ENCODE measurements at regions of chr10 and their contacts with region 1.

Region 1: DNA sequence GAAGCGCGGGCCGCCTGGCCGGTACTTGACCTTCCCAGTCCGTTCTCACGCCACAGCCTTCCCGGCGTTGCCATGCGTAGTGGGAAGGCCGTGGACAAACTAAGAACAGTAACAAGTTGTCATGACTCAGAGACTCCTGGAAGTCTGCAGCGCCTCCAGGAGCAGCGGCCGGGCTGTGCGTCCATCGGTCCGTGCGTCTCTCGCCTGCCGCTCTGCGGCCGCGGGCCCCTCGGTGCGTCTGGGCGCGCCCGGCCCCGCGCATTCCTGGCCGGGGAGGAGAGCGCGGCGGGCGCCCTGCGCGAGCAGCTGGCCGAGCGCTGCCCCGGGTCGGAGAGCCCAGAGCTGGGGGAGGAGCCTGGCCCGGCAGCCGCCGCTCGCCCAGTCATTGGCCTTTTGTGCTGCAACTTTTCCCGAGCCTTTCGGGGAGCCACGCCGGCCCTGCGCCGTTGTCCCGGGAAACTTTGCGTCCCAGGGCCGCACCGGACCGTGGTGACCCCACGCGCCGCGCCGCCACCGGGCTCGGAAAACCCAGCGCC is 123.7 kb downstream of the TACC2 start:
- DNase-seq: peak; percentile 91 to 94
- H3K4me3 ChIP-seq: peak overlapping the region; percentile 94
- H3K4me3 Mint-ChIP-seq: peak overlapping the region; percentile 79
- H3K27ac Mint-ChIP-seq: peak overlapping the region; percentile 61
- H3K4me1 ChIP-seq: peaks cover 16% of the 10 kb centered on the region
- H3K4me1 Mint-ChIP-seq: peaks cover 23% of the 10 kb centered on the region
- H3K27me3 ChIP-seq: no peaks in the 10 kb centered on the region
- H3K27me3 Mint-ChIP-seq: no peaks in the 10 kb centered on the region
- CTCF ChIP-seq: peak in 1 of 2 experiments; percentile 61

Region 2: DNA sequence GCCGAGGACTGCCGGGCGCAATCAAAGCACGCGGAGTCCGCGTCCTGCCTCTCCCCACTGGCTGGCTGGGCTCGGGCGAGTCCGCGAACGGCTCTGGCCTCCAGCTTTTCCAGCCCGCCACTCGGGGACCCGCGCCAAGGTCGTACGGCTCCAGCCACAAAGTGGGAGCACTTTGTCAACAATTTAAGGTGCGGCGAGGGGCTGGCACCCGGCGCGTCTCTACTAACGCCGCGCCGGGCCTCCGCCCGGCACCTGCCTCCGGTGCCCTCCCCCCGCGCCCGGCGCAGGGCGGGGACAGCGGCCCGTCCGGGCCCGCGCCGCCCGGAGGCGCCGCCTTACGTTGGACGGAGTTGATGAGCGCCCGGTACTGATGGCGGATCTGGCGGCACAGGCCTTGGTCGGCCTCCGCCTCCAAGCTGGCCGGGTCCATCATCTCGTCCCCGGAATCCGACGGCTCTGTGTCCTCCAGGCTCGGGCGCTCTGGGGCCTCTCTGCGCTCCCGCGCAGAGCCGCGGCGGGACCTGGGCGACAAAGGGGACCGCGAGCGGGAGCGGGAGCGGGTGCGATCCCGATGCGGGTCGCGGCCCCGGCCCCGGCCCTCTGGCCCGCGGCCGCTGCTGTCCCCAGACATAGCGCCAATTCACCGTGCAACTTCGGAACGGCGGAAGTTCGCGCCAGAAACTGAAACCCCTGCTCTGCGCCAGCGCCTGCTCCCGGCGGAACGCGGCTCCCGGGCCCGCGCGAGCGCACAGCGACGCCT is 138.0 kb before region 1 on chr10 and contains the start of gene NSMCE4A:
- CTCF ChIA-PET with region 1: no interaction called
- POLR2A ChIA-PET with region 1: no interaction called
- intact Hi-C with region 1: loop called (anchors 2 kb)
- DNase-seq: peak; percentile 79 to 89
- H3K4me3 ChIP-seq: peak within 1 kb of the TSS; percentile 95
- H3K4me3 Mint-ChIP-seq: peak within 1 kb of the TSS; percentile 72
- H3K27ac Mint-ChIP-seq: peak within 1 kb of the TSS; percentile 48
- H3K4me1 ChIP-seq: peaks cover 6% of the 10 kb centered on the region
- H3K4me1 Mint-ChIP-seq: peaks cover 9% of the 10 kb centered on the region
- H3K27me3 ChIP-seq: no peaks in the 10 kb centered on the region
- H3K27me3 Mint-ChIP-seq: no peaks in the 10 kb centered on the region
- CTCF ChIP-seq: peak; percentile 60 to 66
- total RNA-seq, gene NSMCE4A: 106 and 111 TPM in 2 replicates

Region 3: GRCh38 chr10:122044045-122044661 is 68.5 kb before region 1 on chr10:
- CTCF ChIA-PET with region 1: interaction called, 10 read pairs
- POLR2A ChIA-PET with region 1: interaction called, 5 read pairs
- intact Hi-C with region 1: no loop called
- DNase-seq: peak; percentile 51 to 55
- H3K4me3 ChIP-seq: no peak overlapping the region
- H3K4me3 Mint-ChIP-seq: peak overlapping the region; percentile 10
- H3K27ac Mint-ChIP-seq: peak overlapping the region; percentile 33
- H3K4me1 ChIP-seq: peaks cover 14% of the 10 kb centered on the region
- H3K4me1 Mint-ChIP-seq: peaks cover 24% of the 10 kb centered on the region
- H3K27me3 ChIP-seq: no peaks in the 10 kb centered on the region
- H3K27me3 Mint-ChIP-seq: no peaks in the 10 kb centered on the region
- CTCF ChIP-seq: no peak

Region 4: DNA sequence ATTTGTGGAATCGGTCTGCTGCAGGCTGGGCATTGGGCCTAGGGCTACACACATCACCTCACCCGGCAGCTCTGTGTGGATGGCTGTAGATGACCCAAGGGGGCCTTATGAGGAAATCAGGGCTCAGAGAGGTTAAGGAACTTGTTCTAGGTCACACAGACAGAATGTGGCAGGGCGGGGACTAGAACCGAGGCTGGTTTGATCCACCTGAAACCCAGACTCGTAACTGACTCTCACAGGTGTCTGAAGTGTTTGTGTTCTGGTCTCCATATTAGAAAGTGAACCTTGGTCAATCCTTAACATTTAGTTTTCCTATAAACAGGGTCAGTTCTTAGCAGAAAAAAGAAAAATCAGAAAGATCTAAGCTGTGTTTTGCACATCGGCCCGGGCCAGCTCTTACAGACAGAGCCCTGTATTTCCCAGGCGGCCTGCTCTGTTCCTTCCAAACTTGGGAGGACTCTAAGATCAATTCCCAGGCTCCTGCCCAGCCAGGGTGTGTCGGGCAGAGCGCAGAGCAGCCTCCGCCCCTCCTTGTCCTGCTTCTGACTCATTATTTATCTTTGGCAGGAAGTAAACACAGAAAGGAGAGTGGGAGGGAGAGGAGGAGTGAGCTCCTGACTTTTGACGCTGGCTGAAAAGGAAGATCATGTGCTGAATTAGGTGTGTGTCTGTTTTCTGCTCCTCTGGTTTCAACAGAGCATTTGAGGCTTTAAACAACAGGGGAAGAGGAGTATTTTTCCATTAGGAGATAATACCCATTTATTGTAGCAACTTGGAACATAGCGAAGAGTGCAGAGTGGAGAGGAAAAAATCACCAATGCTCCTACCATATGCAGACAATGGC is 49.6 kb before region 1 on chr10:
- CTCF ChIA-PET with region 1: interaction called, 12 read pairs
- POLR2A ChIA-PET with region 1: interaction called, 8 read pairs
- intact Hi-C with region 1: loop called (anchors 2 kb)
- DNase-seq: peak; percentile 85
- H3K4me3 ChIP-seq: no peak overlapping the region
- H3K4me3 Mint-ChIP-seq: peak overlapping the region; percentile 72
- H3K27ac Mint-ChIP-seq: peak overlapping the region; percentile 87
- H3K4me1 ChIP-seq: peaks cover 10% of the 10 kb centered on the region
- H3K4me1 Mint-ChIP-seq: peaks cover 22% of the 10 kb centered on the region
- H3K27me3 ChIP-seq: no peaks in the 10 kb centered on the region
- H3K27me3 Mint-ChIP-seq: no peaks in the 10 kb centered on the region
- CTCF ChIP-seq: no peak